ENCODE measurements at regions of chr9 and their contacts with region 1.

Region 1: DNA sequence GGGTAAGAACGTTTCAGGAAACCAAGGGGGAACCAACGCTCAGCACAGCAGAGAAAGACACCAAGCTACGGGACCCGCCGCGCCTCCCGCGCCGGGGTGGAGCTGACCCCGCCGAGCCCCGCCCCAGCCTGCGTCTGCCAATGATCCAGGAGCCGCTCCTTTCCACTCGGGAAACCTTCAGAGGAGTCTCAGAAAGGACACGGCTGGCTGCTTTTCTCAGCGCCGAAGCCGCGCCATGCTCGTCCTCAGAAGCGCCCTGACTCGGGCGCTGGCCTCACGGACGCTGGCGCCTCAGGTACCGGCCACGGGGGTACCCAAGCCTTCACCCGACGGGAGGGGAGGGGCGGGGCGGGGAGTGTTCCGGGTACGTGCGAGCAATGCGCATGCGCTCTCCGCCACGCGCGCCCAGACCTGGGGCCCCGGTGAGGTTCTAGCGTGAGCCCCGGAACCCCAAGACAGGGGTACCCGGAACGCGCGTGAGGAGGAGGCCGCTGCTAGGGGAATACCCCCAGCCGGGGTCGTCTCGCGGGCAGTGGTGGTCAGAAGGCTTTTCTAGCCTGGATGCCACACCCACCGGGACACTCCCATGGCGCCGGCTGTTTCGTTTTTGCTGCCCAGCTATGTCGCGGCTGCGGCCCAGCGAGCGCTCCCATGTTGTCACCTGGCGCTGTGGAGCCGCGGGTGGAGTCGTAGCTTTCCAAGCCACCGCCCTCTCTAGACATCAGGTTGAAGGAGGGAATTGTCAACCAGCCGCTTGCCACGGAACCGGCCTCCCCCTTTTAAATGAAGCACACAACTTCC is at the start of gene NIPSNAP3A:
- DNase-seq: peak; percentile 76 to 96 (median 87)
- ATAC-seq: peak; percentile 87
- H3K4me3 ChIP-seq: peak within 1 kb of the TSS; percentile 74 to 94
- H3K4me3 Mint-ChIP-seq: peak within 1 kb of the TSS; percentile 99
- H3K27ac ChIP-seq: peak within 1 kb of the TSS; percentile 82 to 93
- H3K27ac Mint-ChIP-seq: peak within 1 kb of the TSS; percentile 99
- H3K4me1 ChIP-seq: peaks cover 6% of the 10 kb centered on the region
- H3K4me1 Mint-ChIP-seq: peaks cover 20% of the 10 kb centered on the region
- H3K27me3 ChIP-seq: no peaks in the 10 kb centered on the region
- H3K27me3 Mint-ChIP-seq: no peaks in the 10 kb centered on the region
- CTCF ChIP-seq: no peak
- total RNA-seq, gene NIPSNAP3A: 9.2 to 9.5 TPM

Region 2: GRCh38 chr9:104093647-104094533 is 653.9 kb before region 1 on chr9 and contains the start of gene SMC2:
- CTCF ChIA-PET with region 1: no interaction called
- POLR2A ChIA-PET with region 1: interaction called, 16 read pairs
- intact Hi-C with region 1: loop called (anchors 1 to 2 kb)
- DNase-seq: peak; percentile 90 to 96 (median 94)
- ATAC-seq: peak; percentile 96
- H3K4me3 ChIP-seq: peak within 1 kb of the TSS; percentile 58 to 79
- H3K4me3 Mint-ChIP-seq: peak within 1 kb of the TSS; percentile 98
- H3K27ac ChIP-seq: peak within 1 kb of the TSS; percentile 78 to 98
- H3K27ac Mint-ChIP-seq: peak within 1 kb of the TSS; percentile 98
- H3K4me1 ChIP-seq: peaks cover 21% of the 10 kb centered on the region
- H3K4me1 Mint-ChIP-seq: peaks cover 44% of the 10 kb centered on the region
- H3K27me3 ChIP-seq: no peaks in the 10 kb centered on the region
- H3K27me3 Mint-ChIP-seq: no peaks in the 10 kb centered on the region
- CTCF ChIP-seq: no peak
- total RNA-seq, gene SMC2: 1.9 to 2.0 TPM

Region 3: GRCh38 chr9:104711604-104712003 is 36.2 kb before region 1 on chr9:
- CTCF ChIA-PET with region 1: no interaction called
- POLR2A ChIA-PET with region 1: no interaction called
- intact Hi-C with region 1: no loop called
- DNase-seq: no peak
- ATAC-seq: no peak
- H3K4me3 ChIP-seq: no peak overlapping the region
- H3K4me3 Mint-ChIP-seq: no peak overlapping the region
- H3K27ac ChIP-seq: no peak overlapping the region
- H3K27ac Mint-ChIP-seq: no peak overlapping the region
- H3K4me1 ChIP-seq: no peaks in the 10 kb centered on the region
- H3K4me1 Mint-ChIP-seq: no peaks in the 10 kb centered on the region
- H3K27me3 ChIP-seq: no peaks in the 10 kb centered on the region
- H3K27me3 Mint-ChIP-seq: no peaks in the 10 kb centered on the region
- CTCF ChIP-seq: no peak

Region 4: DNA sequence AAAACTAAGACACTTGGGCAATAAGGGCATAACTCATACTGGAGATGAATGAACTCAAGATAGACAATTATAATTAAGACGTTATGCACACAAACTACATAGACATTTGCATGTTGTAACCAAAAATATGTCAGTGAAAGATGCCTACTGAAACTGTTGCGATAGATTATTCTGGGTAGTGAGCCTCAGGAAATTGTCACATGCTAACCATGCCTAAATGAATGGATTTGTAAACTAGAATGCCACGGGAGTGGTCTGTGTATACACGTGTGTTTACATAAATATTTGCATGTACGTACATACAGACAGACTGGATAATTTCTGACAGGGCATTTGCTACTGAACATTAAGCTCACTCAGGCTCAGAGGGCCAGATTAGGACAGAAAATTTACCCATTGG is 17.4 kb after region 1 on chr9:
- CTCF ChIA-PET with region 1: interaction called, 4 read pairs
- POLR2A ChIA-PET with region 1: interaction called, 24 read pairs
- intact Hi-C with region 1: loop called in 1 of 2 experiments (anchors 1 kb)
- DNase-seq: no peak
- ATAC-seq: no peak
- H3K4me3 ChIP-seq: no peak overlapping the region
- H3K4me3 Mint-ChIP-seq: peak overlapping the region; percentile 95
- H3K27ac ChIP-seq: no peak overlapping the region
- H3K27ac Mint-ChIP-seq: no peak overlapping the region
- H3K4me1 ChIP-seq: no peaks in the 10 kb centered on the region
- H3K4me1 Mint-ChIP-seq: peaks cover 11% of the 10 kb centered on the region
- H3K27me3 ChIP-seq: no peaks in the 10 kb centered on the region
- H3K27me3 Mint-ChIP-seq: no peaks in the 10 kb centered on the region
- CTCF ChIP-seq: no peak

Region 5: GRCh38 chr9:104991144-104991953 is 243.6 kb after region 1 on chr9:
- CTCF ChIA-PET with region 1: no interaction called
- POLR2A ChIA-PET with region 1: no interaction called
- intact Hi-C with region 1: loop called in 1 of 2 experiments (anchors 2 kb)
- DNase-seq: peak; percentile 58 to 93 (median 81)
- ATAC-seq: peak; percentile 72
- H3K4me3 ChIP-seq: peak overlapping the region; percentile 73 to 81
- H3K4me3 Mint-ChIP-seq: peak overlapping the region; percentile 89
- H3K27ac ChIP-seq: peak overlapping the region; percentile 78 to 87
- H3K27ac Mint-ChIP-seq: peak overlapping the region; percentile 96
- H3K4me1 ChIP-seq: peaks cover 38% of the 10 kb centered on the region
- H3K4me1 Mint-ChIP-seq: peaks cover 38% of the 10 kb centered on the region
- H3K27me3 ChIP-seq: peaks cover 0 to 2% of the 10 kb centered on the region in 2 experiments
- H3K27me3 Mint-ChIP-seq: peaks cover 4% of the 10 kb centered on the region
- CTCF ChIP-seq: no peak

Region 6: DNA sequence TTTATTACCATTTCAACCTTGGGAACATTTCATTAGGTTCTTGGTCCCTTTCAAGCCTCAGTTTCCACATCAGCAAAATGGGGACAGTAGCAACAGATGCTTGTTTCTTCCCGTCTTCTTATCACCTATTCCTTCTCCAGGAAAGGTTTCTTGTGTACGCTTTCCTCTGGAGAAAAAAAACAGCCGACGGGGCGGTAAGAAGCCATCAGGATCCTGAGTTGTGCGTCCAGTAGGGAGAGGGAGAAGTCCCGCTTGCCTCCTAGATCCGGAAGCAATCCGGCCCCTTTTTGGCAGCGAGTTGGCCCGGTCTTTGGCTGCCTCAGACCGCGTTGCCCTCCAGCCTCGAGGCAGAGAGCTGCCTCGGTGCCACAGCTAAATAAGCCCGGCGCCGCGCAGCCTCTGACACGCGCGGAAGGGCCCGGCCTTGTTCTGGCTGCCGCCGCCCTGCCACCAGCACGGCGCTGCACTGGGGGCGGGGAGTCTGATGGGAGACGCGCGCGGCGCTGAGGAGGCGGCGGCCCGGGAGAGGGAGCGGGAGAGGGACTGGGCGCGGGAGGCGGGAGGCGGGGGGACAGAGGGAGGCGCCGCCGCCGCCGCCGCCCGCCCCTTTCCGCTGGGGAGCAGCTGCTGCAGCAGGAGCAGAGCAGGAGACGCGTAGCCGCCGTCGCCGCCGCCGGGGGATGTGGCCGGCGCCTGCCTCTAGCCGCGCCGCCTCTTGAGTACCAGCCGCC is 496.4 kb after region 1 on chr9 and contains the start of gene SLC44A1:
- CTCF ChIA-PET with region 1: no interaction called
- POLR2A ChIA-PET with region 1: interaction called, 6 read pairs
- intact Hi-C with region 1: loop called (anchors 2 to 5 kb)
- DNase-seq: peak; percentile 77 to 95 (median 89)
- ATAC-seq: peak; percentile 83
- H3K4me3 ChIP-seq: peak within 1 kb of the TSS; percentile 61 to 63
- H3K4me3 Mint-ChIP-seq: peak within 1 kb of the TSS; percentile 90
- H3K27ac ChIP-seq: peak within 1 kb of the TSS; percentile 48 to 72
- H3K27ac Mint-ChIP-seq: peak within 1 kb of the TSS; percentile 90
- H3K4me1 ChIP-seq: peaks cover 12% of the 10 kb centered on the region
- H3K4me1 Mint-ChIP-seq: peaks cover 28% of the 10 kb centered on the region
- H3K27me3 ChIP-seq: peaks cover 0 to 3% of the 10 kb centered on the region in 2 experiments
- H3K27me3 Mint-ChIP-seq: peaks cover 10% of the 10 kb centered on the region
- CTCF ChIP-seq: no peak
- total RNA-seq, gene SLC44A1: 2.4 to 2.5 TPM

Region 7: DNA sequence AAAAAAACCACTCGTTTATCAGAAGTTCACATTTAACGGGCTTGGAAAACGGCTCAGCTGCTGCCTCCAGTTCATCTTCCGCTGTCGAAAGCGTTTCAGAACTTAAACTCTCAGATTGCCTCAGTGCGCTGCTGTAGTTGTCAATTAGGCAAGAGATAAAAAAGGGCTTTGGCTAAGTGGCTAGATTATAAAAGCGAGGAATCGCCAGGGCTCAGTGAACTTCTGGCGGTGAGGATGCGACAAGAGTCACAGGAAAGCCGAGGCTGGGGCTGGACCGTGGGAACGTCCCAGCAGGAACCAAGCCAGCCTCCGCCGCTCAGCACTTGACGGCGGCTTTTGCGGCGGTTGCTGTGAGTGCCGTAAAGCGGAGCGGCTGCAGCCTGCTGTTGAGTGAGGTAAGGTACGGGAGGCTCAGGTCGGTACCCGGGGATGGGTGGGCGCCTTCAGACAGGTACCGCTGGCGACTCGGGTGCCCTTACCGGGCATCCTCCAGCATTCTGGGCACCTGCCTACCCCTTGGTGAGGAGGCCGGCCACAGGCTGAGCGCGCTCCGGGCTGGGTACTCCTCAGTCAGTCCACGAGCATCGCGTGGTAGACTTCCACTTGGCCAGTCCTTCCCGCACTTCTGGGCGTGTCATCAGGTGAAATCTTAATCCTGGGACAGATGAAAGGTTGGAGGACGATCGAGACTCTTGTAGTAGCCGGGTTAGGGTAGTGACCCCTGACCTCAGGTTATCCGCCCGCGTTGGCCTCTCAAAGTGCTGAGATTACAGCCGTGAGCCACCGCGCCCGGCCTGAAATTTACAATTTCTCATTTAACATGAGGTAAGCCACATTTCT is 810.2 kb after region 1 on chr9 and contains the start of gene FKTN:
- CTCF ChIA-PET with region 1: no interaction called
- POLR2A ChIA-PET with region 1: no interaction called
- intact Hi-C with region 1: loop called in 1 of 2 experiments (anchors 1 kb)
- DNase-seq: peak; percentile 64 to 86 (median 81)
- ATAC-seq: peak; percentile 96
- H3K4me3 ChIP-seq: peak within 1 kb of the TSS; percentile 72 to 93
- H3K4me3 Mint-ChIP-seq: peak within 1 kb of the TSS; percentile 96
- H3K27ac ChIP-seq: peak within 1 kb of the TSS; percentile 45 to 69
- H3K27ac Mint-ChIP-seq: peak within 1 kb of the TSS; percentile 80
- H3K4me1 ChIP-seq: peaks cover 8% of the 10 kb centered on the region
- H3K4me1 Mint-ChIP-seq: peaks cover 19% of the 10 kb centered on the region
- H3K27me3 ChIP-seq: no peaks in the 10 kb centered on the region
- H3K27me3 Mint-ChIP-seq: no peaks in the 10 kb centered on the region
- CTCF ChIP-seq: no peak
- total RNA-seq, gene FKTN: 2.1 to 3.2 TPM